ENCODE measurements at regions of chr2 and their contacts with region 1.

Region 1: DNA sequence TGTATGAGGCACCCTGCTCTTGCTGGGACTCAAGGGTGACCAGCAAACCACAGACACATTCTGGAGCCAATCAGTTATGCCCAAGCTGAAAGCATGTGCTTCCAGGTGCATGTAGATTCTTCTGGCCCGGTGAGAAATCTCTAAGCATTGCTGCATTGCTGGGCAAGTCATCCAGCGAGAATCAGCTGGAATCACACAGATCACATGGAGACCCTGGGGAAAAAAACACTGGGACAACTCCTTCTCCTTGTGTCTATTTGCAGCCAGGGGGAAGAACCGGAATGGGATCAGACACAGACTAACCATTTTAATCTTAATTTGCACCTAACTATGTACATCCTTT is 119.7 kb upstream of the KLF7 start:
- DNase-seq: no peak
- ATAC-seq: peak; percentile 11

Region 2: GRCh38 chr2:207334624-207335371 is 49.4 kb after region 1 on chr2:
- intact Hi-C with region 1: loop called (anchors 2 kb)
- DNase-seq: peak; percentile 67
- ATAC-seq: peak; percentile 72

Region 3: GRCh38 chr2:207385903-207386302 is 100.5 kb after region 1 on chr2:
- intact Hi-C with region 1: no loop called
- DNase-seq: no peak
- ATAC-seq: no peak

Measured in Right ventricle myocardium superior (tissue), 1 donor.